Gastrocnemius medialis (tissue), 4 donors: ENCODE measurements at regions of chr2 and their contacts with region 1.

Region 1: GRCh38 chr2:85561317-85561979 is at the start of gene GGCX:
- DNase-seq: peak; percentile 90 to 96
- ATAC-seq: peak; percentile 90 to 92
- H3K4me3 ChIP-seq: peak within 1 kb of the TSS; percentile 69 to 93 (median 90)
- H3K27ac ChIP-seq: peak within 1 kb of the TSS; percentile 91 to 95 (median 93)
- H3K4me1 ChIP-seq: peaks cover 22 to 24% of the 10 kb centered on the region in 2 donors
- H3K27me3 ChIP-seq: no peaks in the 10 kb centered on the region
- CTCF ChIP-seq: peak in 3 of 5 experiments; percentile 27 to 58 (median 55)
- POLR2A ChIP-seq: peak; percentile 81 to 83
- total RNA-seq, gene GGCX: 18.3 to 33.1 (median 28.2) TPM

Region 2: GRCh38 chr2:85390941-85391669 is 170.3 kb before region 1 on chr2:
- in situ Hi-C with region 1: no loop called
- intact Hi-C with region 1: no loop called
- DNase-seq: peak in 1 of 2 donors; percentile 50
- ATAC-seq: no peak
- H3K4me3 ChIP-seq: no peak overlapping the region
- H3K27ac ChIP-seq: no peak overlapping the region
- H3K4me1 ChIP-seq: peaks cover 12 to 15% of the 10 kb centered on the region in 2 donors
- H3K27me3 ChIP-seq: no peaks in the 10 kb centered on the region
- CTCF ChIP-seq: peak; percentile 7 to 64 (median 47)
- POLR2A ChIP-seq: no peak

Region 3: GRCh38 chr2:85602476-85603234 is 41.2 kb after region 1 on chr2 and contains the start of gene TMEM150A:
- in situ Hi-C with region 1: no loop called
- intact Hi-C with region 1: loop called (anchors 5 kb)
- DNase-seq: peak; percentile 92 to 95
- ATAC-seq: peak; percentile 51 to 60
- H3K4me3 ChIP-seq: peak within 1 kb of the TSS; percentile 74 to 84 (median 84)
- H3K27ac ChIP-seq: peak within 1 kb of the TSS; percentile 93 to 99 (median 94)
- H3K4me1 ChIP-seq: peaks cover 58 to 60% of the 10 kb centered on the region in 2 donors
- H3K27me3 ChIP-seq: no peaks in the 10 kb centered on the region
- CTCF ChIP-seq: peak in 4 of 5 experiments; percentile 68 to 75 (median 71)
- POLR2A ChIP-seq: peak; percentile 98 to 99
- total RNA-seq, gene TMEM150A: 44.4 to 102 (median 80.7) TPM